HepG2 (cell line): ENCODE measurements at regions of chr4 and their contacts with region 1.

Region 1: GRCh38 chr4:185811509-185812364 is at the start of gene SORBS2:
- DNase-seq: peak; percentile 81
- ATAC-seq: peak; percentile 72
- H3K4me3 ChIP-seq: peak within 1 kb of the TSS; percentile 60 to 82 (median 82)
- H3K27ac ChIP-seq: peak within 1 kb of the TSS; percentile 97
- H3K4me1 ChIP-seq: peaks cover 46% of the 10 kb centered on the region
- H3K27me3 ChIP-seq: no peaks in the 10 kb centered on the region; a peak in 1 of 5 replicates
- CTCF ChIP-seq: no peak
- EP300 ChIP-seq: no peak
- POLR2A ChIP-seq: peak in 1 of 2 experiments; percentile 42; a peak in 1 of 4 replicates
- RAD21 ChIP-seq: no peak
- total RNA-seq, gene SORBS2: 25.0 and 29.0 TPM in 2 replicates

Region 2: DNA sequence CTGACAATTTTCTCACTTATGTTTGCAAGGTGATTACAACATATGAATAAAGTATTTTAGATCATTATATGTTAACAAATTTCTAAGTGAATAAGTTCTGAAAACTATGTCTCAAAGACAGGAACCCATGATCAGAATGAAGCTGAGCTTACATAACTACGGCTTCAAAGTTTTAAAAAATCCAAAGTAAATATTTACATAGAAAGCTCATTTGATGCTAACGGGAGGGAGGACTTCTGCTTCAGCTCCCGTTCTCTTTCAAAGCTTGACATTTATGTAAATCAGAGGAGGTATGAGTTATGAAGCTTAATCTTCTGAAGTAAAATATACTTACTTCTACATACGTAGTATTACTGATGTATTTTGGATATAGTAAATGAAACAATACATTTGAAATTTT is 203.6 kb before region 1 on chr4:
- CTCF ChIA-PET with region 1: no interaction called
- POLR2A ChIA-PET with region 1: no interaction called
- in situ Hi-C with region 1: no loop called
- intact Hi-C with region 1: no loop called
- DNase-seq: no peak
- ATAC-seq: no peak
- H3K4me3 ChIP-seq: no peak overlapping the region
- H3K27ac ChIP-seq: no peak overlapping the region
- H3K4me1 ChIP-seq: no peaks in the 10 kb centered on the region
- H3K27me3 ChIP-seq: no peaks in the 10 kb centered on the region
- CTCF ChIP-seq: no peak
- EP300 ChIP-seq: no peak
- POLR2A ChIP-seq: no peak
- RAD21 ChIP-seq: no peak

Region 3: DNA sequence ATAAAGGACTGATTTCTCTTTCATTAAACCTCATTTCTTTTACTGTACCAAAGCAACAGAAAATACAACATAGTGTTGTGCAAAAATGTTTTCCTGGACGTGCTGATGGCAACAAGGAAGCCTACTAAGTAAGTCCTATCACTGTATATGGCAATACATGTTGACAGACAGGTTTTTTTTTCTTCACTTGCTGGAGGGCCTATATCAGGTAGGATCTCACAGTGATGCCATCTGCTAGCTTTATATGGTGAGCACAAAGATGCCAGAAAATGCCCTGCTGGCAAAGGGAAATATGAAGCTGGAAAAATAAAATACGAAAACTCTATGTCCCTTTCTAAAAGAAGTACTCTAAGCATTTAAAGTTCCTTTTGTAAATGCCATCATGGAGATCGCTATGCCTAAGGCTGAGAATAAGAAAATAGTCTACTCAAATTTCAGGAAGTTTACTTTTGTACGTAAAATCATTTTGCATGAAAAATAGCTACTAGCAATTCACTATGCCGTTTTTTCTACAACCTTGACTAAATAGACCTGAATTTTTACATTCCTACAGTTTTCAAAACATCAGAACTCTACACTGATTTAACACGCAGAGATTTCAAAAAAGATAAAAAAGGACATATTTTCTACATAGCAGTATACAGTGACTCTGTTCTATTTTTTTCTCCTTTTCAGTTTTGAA is 157.3 kb before region 1 on chr4:
- CTCF ChIA-PET with region 1: no interaction called
- POLR2A ChIA-PET with region 1: interaction called, 3 read pairs
- in situ Hi-C with region 1: no loop called
- intact Hi-C with region 1: loop called (anchors 5 kb)
- DNase-seq: no peak
- ATAC-seq: no peak
- H3K4me3 ChIP-seq: no peak overlapping the region
- H3K27ac ChIP-seq: no peak overlapping the region
- H3K4me1 ChIP-seq: peaks cover 31% of the 10 kb centered on the region
- H3K27me3 ChIP-seq: no peaks in the 10 kb centered on the region
- CTCF ChIP-seq: no peak
- EP300 ChIP-seq: no peak
- POLR2A ChIP-seq: no peak
- RAD21 ChIP-seq: no peak

Region 4: GRCh38 chr4:185721190-185721932 is 90.4 kb before region 1 on chr4:
- CTCF ChIA-PET with region 1: no interaction called
- POLR2A ChIA-PET with region 1: interaction called, 13 read pairs
- in situ Hi-C with region 1: no loop called
- intact Hi-C with region 1: no loop called
- DNase-seq: peak; percentile 68
- ATAC-seq: peak; percentile 92
- H3K4me3 ChIP-seq: peak overlapping the region; percentile 2 to 20 (median 14); a peak in 1 of 6 replicates
- H3K27ac ChIP-seq: peak overlapping the region; percentile 85
- H3K4me1 ChIP-seq: peaks cover 72% of the 10 kb centered on the region
- H3K27me3 ChIP-seq: no peaks in the 10 kb centered on the region
- CTCF ChIP-seq: no peak
- EP300 ChIP-seq: no peak
- POLR2A ChIP-seq: no peak
- RAD21 ChIP-seq: no peak

Region 5: DNA sequence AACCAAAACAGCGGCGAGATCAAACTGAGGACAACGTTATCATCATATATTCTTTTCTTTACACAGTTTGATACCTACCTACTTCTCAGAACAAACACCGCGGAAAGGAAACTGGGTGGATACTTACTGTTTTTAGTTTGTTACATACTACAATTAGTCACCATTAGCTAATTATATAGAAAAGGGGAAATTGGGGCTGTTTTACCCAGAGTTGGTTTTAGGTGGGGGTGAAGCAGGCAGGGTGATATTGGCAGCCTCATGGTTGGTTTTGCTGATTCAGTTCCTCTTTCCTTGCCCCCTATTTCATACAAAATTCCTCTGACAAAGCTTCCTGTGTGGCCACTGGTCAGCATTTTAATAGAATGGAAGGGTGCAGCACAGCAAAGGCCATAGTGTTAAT is 77.5 kb before region 1 on chr4:
- CTCF ChIA-PET with region 1: no interaction called
- POLR2A ChIA-PET with region 1: no interaction called
- in situ Hi-C with region 1: no loop called
- intact Hi-C with region 1: no loop called
- DNase-seq: no peak
- ATAC-seq: no peak
- H3K4me3 ChIP-seq: no peak overlapping the region
- H3K27ac ChIP-seq: no peak overlapping the region
- H3K4me1 ChIP-seq: peaks cover 10% of the 10 kb centered on the region
- H3K27me3 ChIP-seq: no peaks in the 10 kb centered on the region
- CTCF ChIP-seq: no peak
- EP300 ChIP-seq: no peak
- POLR2A ChIP-seq: no peak
- RAD21 ChIP-seq: no peak

Region 6: GRCh38 chr4:185836241-185837084 is 24.7 kb after region 1 on chr4:
- CTCF ChIA-PET with region 1: no interaction called
- POLR2A ChIA-PET with region 1: interaction called, 9 read pairs
- in situ Hi-C with region 1: no loop called
- intact Hi-C with region 1: loop called (anchors 1 kb)
- DNase-seq: peak; percentile 70
- ATAC-seq: peak; percentile 92
- H3K4me3 ChIP-seq: peak overlapping the region; percentile 4 to 51 (median 38); a peak in 4 of 6 replicates
- H3K27ac ChIP-seq: peak overlapping the region; percentile 66
- H3K4me1 ChIP-seq: peaks cover 58% of the 10 kb centered on the region
- H3K27me3 ChIP-seq: no peaks in the 10 kb centered on the region
- CTCF ChIP-seq: no peak
- EP300 ChIP-seq: no peak; a peak in 1 of 4 replicates
- POLR2A ChIP-seq: no peak
- RAD21 ChIP-seq: no peak

Region 7: GRCh38 chr4:185865901-185866328 is 54.2 kb after region 1 on chr4:
- CTCF ChIA-PET with region 1: no interaction called
- POLR2A ChIA-PET with region 1: no interaction called
- in situ Hi-C with region 1: no loop called
- intact Hi-C with region 1: no loop called
- DNase-seq: no peak
- ATAC-seq: no peak
- H3K4me3 ChIP-seq: no peak overlapping the region
- H3K27ac ChIP-seq: no peak overlapping the region
- H3K4me1 ChIP-seq: peaks cover 5% of the 10 kb centered on the region; the same call in 1 of the 2 replicates
- H3K27me3 ChIP-seq: peaks cover 0 to 11% of the 10 kb centered on the region in 2 experiments; a peak in 3 of 5 replicates
- CTCF ChIP-seq: no peak
- EP300 ChIP-seq: no peak
- POLR2A ChIP-seq: no peak
- RAD21 ChIP-seq: no peak

Region 8: GRCh38 chr4:186021461-186022167 is 209.9 kb after region 1 on chr4:
- CTCF ChIA-PET with region 1: no interaction called
- POLR2A ChIA-PET with region 1: interaction called, 3 read pairs
- in situ Hi-C with region 1: no loop called
- intact Hi-C with region 1: loop called (anchors 1 kb)
- DNase-seq: peak; percentile 30
- ATAC-seq: peak; percentile 73
- H3K4me3 ChIP-seq: no peak overlapping the region
- H3K27ac ChIP-seq: no peak overlapping the region
- H3K4me1 ChIP-seq: peaks cover 4% of the 10 kb centered on the region; the same call in 1 of the 2 replicates
- H3K27me3 ChIP-seq: peaks cover 3 to 25% of the 10 kb centered on the region in 2 experiments; a peak in 2 of 5 replicates
- CTCF ChIP-seq: peak; percentile 87
- EP300 ChIP-seq: no peak
- POLR2A ChIP-seq: no peak
- RAD21 ChIP-seq: peak; percentile 84